A549 (cell line): ENCODE measurements at regions of chr14 and their contacts with region 1.

Region 1: DNA sequence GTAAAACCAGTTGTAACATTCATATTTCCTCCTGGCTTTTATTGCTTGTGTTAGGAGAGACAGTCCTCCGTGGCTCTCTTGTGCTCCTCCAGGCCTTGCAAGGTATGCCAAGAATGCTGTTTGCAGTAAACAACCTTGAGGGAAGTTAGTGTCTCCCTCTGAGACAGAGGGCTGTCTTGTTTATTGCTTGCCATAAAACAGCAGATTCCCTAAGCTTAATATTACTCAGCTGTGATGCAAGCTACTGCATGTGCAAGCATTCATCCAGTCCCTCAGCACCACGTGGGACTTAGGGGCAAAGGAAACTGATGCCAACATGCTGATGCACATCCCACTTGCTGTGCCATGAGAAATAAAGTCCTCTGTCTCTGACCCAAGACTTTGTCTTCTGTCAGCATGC is 6.6 kb downstream of the POMT2 start:
- DNase-seq: peak in 1 of 2 experiments; percentile 84
- ATAC-seq: peak; percentile 82 to 85
- H3K4me3 ChIP-seq: no peak overlapping the region
- H3K27ac ChIP-seq: peak overlapping the region; percentile 73 to 76
- H3K4me1 ChIP-seq: peaks cover 56% of the 10 kb centered on the region
- CTCF ChIP-seq: no peak
- EP300 ChIP-seq: no peak; a peak in 1 of 5 replicates
- POLR2A ChIP-seq: no peak
- RAD21 ChIP-seq: no peak

Region 2: DNA sequence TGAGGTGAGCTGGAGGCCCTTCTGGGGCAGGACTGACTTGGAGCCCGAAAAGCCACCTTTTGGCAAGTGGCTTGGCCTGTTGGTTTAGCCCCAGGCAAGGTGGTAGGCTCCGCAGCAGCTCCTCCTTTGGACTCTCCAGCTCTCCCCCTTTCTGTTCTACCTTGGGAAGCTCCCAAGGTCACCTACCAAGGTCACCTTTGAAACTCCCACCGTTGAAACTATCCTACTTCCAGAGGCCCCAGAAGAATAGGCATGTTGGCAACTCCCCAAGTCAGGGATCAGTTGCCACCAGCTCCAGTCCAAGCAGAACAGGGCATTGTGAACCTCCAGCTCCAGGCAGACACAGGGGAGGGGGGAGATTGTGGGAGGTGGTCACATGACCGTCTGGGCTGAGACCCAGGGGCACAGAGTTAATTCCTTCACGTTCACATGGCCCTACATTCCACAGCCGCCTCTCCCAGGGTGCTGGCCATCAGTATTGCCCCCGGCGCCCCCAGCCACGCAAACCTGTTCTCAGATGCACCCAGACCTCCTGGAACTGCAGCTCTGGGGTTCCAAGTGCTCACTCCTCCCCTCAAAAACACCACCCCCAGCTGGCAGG is 299.9 kb before region 1 on chr14:
- CTCF ChIA-PET with region 1: no interaction called
- POLR2A ChIA-PET with region 1: no interaction called
- DNase-seq: no peak
- ATAC-seq: no peak
- H3K4me3 ChIP-seq: no peak overlapping the region
- H3K27ac ChIP-seq: peak overlapping the region in 1 of 2 experiments; percentile 49; a peak in 2 of 6 replicates
- H3K4me1 ChIP-seq: no peaks in the 10 kb centered on the region
- CTCF ChIP-seq: no peak
- EP300 ChIP-seq: no peak
- POLR2A ChIP-seq: no peak
- RAD21 ChIP-seq: no peak

Region 3: GRCh38 chr14:77139540-77140358 is 174.3 kb before region 1 on chr14:
- CTCF ChIA-PET with region 1: interaction called, 23 read pairs
- POLR2A ChIA-PET with region 1: no interaction called
- DNase-seq: peak; percentile 59 to 89
- ATAC-seq: peak; percentile 67 to 87
- H3K4me3 ChIP-seq: peak overlapping the region; percentile 58
- H3K27ac ChIP-seq: peak overlapping the region in 1 of 2 experiments; percentile 43; a peak in 1 of 6 replicates
- H3K4me1 ChIP-seq: peaks cover 9% of the 10 kb centered on the region
- CTCF ChIP-seq: peak; percentile 70
- EP300 ChIP-seq: no peak
- POLR2A ChIP-seq: no peak
- RAD21 ChIP-seq: peak; percentile 55 to 59

Region 4: DNA sequence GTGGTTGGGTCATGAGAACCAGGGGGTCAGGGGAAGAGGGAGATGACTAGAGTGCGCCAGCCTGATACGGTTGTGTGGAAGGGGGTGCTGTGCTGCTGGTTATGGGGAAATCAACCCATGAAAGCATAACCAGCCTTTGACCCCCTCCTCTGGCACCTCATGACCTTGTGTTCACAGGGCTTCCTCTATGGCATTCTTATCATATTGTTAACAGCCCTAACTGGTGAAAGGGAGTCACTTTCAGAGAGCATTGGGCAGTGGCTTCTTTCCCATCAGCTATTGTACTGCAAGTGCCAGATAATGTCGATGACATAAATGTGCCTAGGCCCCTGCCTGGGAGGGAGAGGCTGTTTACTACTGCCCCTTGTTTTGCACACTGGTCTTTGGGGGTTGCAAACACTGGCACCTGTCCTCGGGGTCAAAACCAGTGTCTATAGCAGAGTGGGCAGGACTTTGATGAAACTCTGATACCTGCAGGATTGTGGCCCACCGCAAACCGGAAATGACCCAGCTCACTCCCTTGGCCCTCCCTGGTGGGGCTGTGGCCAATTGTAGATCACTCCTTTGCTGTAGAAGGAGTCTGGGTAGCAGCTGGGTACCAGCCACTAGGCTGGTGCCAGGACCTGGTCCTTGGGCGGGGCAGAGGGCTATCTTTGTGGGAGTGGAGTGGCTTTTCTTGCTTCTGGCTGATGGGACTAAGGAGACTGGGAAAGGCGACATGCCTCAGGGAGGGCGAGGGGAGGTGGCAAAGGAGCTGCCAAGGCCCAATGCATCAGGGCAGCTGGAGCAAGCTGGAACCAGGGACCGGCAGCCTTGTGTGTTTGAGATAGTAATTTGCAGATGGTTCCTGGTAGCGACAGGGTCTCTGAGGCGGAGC is 133.1 kb before region 1 on chr14:
- CTCF ChIA-PET with region 1: interaction called, 10 read pairs
- POLR2A ChIA-PET with region 1: no interaction called
- DNase-seq: no peak
- ATAC-seq: peak; percentile 17 to 52
- H3K4me3 ChIP-seq: peak overlapping the region; percentile 66
- H3K27ac ChIP-seq: peak overlapping the region in 1 of 2 experiments; percentile 78; a peak in 3 of 6 replicates
- H3K4me1 ChIP-seq: peaks cover 12% of the 10 kb centered on the region; the same call in 2 of the 3 replicates
- CTCF ChIP-seq: no peak
- EP300 ChIP-seq: no peak
- POLR2A ChIP-seq: no peak
- RAD21 ChIP-seq: no peak

Region 5: DNA sequence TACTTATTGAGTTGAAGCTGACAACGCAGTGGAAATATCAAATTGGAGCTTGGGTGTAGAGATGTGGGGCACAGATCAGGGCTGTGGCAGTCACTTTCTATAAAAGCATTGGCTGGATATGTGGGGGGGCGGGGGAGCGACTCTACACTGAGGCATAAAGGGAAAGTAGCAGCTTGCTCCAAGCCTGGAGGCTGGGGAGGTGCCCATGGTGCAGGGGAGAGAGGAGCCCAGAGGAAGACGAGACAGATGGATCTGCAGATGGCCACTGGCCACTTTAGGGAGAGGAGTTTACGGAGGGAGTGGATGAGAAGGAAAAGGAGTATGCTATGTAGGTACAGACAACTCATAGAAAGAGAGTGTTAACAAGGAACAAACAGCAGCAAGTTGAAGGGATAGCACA is 29.6 kb before region 1 on chr14:
- CTCF ChIA-PET with region 1: interaction called, 622 read pairs
- POLR2A ChIA-PET with region 1: no interaction called
- DNase-seq: no peak
- ATAC-seq: no peak
- H3K4me3 ChIP-seq: no peak overlapping the region
- H3K27ac ChIP-seq: no peak overlapping the region
- H3K4me1 ChIP-seq: no peaks in the 10 kb centered on the region
- CTCF ChIP-seq: no peak
- EP300 ChIP-seq: no peak
- POLR2A ChIP-seq: no peak
- RAD21 ChIP-seq: no peak

Region 6: DNA sequence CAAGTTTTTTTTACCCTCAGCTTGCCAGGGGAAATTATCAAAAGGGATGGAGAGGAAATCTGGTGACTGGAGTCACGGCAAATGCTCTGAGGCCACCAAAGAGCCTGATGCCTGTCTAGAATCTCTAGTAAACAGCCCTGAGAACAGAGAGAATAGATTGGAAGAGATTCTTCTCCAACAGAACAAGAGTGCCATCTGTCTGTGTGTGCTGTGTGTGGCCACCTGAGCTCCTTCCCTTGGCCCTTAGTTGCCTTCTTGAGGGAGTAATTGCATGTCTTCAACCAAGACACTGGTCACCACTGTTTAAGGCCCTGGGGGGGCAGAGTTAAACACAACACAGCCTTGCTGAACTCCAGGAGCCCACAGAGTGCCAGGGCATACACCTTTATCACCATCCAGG is 12.1 kb after region 1 on chr14:
- CTCF ChIA-PET with region 1: interaction called, 37 read pairs
- POLR2A ChIA-PET with region 1: interaction called, 4 read pairs
- DNase-seq: no peak
- ATAC-seq: no peak
- H3K4me3 ChIP-seq: no peak overlapping the region
- H3K27ac ChIP-seq: no peak overlapping the region
- H3K4me1 ChIP-seq: peaks cover 6% of the 10 kb centered on the region
- CTCF ChIP-seq: no peak
- EP300 ChIP-seq: no peak
- POLR2A ChIP-seq: no peak
- RAD21 ChIP-seq: peak in 1 of 2 experiments; percentile 34; a peak in 1 of 5 replicates